ENCODE measurements at regions of chr19 and their contacts with region 1.

Region 1: DNA sequence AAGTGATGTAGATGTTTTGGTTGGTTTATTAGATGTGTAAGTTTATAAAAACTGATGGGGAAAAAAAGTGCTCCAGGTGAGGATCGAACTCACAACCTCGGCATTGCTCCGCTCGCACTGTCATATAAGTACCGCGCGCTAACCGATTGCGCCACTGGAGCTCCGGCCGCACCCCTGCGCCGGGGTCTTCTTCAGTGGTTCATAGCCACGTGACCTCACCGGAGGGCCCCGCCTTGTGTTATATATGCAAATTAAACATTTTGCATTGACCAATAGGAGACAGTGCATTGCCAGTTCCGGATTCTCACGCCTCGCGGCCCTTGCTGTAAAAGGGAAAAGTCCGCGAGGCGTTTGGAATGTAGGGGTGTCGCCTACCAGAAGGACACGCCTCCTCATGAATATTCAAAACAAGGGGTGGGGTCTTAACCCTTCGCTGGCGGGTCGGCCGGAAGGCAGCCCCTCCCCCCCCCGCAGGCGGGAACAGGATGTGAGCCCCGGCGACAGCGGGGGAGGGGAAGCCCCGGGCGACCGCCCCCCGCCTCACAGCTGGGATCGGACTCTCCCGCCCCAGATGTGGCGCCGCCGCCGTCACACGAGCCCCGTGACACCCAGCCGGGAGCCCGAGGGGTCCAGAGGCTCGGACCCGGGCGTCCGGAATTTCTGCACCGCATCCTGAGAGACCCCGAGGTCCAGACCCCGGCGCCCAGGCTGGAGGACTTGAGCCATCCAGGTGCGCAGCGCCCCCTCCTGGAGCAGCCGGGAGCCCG is at the start of gene PLEKHG2:
- DNase-seq: peak; percentile 98
- ATAC-seq: peak; percentile 73
- H3K4me3 Mint-ChIP-seq: peak within 1 kb of the TSS; percentile 73
- H3K27ac Mint-ChIP-seq: peak within 1 kb of the TSS; percentile 92
- H3K4me1 Mint-ChIP-seq: peaks cover 32% of the 10 kb centered on the region
- H3K27me3 Mint-ChIP-seq: no peaks in the 10 kb centered on the region
- total RNA-seq, gene PLEKHG2: 46.0 to 65.5 TPM

Region 2: DNA sequence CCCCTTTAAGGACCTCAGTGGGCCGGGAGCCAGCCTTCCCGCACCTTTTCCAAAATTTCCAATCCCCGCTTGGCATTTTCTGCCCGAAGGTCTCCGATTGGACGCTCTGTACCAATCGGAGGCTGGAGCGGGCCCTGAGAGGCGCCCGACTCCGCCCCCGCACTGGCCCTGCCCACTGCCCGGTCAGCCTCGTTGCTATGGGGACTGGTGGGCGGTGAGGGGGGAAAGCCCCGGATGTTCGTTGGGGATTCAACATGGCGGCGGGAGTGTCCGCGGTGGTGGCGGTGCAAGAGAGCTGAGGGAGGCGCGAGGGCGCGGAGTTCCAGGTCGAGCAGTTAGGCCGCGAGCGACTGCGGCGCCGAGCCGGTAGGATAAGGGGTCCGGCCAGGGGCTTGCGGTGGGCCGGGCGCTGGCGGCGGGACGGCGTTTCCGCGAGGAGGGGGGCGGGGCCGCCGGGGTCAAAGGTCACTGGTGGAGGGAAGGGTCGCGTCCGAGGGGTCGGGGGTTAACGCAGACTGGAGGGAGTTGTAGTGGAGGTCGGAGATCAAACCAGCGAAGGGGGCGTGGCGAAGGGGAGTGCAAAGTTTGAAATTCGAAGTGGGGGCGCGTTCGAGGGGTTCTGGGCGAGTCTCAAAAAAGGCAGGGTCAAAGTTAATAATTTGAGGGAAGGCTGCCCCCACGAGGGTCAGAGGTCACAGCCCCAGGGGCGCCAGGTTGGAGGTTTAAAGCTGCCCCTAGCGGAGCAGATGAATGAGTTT is 286.6 kb before region 1 on chr19 and contains the start of gene PAK4:
- CTCF ChIA-PET with region 1: no interaction called
- POLR2A ChIA-PET with region 1: no interaction called
- intact Hi-C with region 1: loop called in 1 of 2 experiments (anchors 1 kb)
- DNase-seq: peak; percentile 99
- ATAC-seq: peak; percentile 94
- H3K4me3 Mint-ChIP-seq: peak within 1 kb of the TSS; percentile 82
- H3K27ac Mint-ChIP-seq: peak within 1 kb of the TSS; percentile 90
- H3K4me1 Mint-ChIP-seq: peaks cover 25% of the 10 kb centered on the region
- H3K27me3 Mint-ChIP-seq: no peaks in the 10 kb centered on the region
- total RNA-seq, gene PAK4: 14.2 to 22.6 TPM

Region 3: DNA sequence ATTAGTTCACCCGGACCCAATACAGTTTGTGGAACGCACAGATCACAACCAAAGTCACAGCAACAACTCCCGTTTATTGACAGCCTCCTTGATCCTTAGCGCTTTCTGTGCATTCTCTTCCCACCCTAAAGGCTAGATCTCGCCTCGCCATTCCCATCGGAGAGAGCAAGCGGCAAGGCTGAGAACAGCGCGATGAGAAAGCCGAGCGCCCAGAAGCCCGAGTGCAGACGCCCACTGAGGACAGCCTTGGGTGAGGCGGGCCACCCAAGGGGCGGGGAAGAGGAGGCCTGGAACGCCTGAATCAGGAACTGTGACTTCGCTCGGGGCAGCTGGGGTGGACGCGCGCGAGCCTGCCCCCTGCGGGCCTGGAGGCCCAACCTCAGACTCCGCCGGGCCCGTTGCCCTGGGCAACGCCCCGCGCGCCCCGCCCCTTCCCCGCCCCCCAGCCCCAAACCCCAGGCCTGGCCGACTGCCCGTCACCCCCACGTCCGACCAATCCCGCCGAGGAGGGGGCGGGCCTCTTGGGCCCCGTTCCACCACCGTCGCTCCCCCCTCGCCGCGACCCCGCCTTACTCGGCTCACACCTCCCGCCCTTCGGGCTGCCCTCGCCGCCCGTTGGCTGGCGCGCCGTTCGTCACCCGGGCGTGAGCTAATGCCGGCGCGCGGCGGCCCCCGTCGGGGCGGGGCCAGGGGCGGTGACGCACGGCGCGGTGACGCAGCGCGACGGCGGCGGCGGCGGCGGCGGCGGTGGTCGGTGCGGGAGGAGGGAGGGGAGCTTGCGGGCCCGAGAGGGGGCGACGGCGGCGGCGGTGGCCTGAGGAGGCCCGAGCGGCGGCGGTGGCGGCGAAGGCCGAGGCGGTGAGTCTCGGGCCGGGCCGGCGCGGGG is 70.3 kb before region 1 on chr19 and contains the start of gene SAMD4B:
- CTCF ChIA-PET with region 1: interaction called, 4 read pairs
- POLR2A ChIA-PET with region 1: interaction called, 3 read pairs
- intact Hi-C with region 1: loop called (anchors 1 kb)
- DNase-seq: peak; percentile 100
- ATAC-seq: peak; percentile 90
- H3K4me3 Mint-ChIP-seq: peak within 1 kb of the TSS; percentile 83
- H3K27ac Mint-ChIP-seq: peak within 1 kb of the TSS; percentile 88
- H3K4me1 Mint-ChIP-seq: peaks cover 69% of the 10 kb centered on the region
- H3K27me3 Mint-ChIP-seq: no peaks in the 10 kb centered on the region
- total RNA-seq, gene SAMD4B: 45.2 to 46.9 TPM

Region 4: DNA sequence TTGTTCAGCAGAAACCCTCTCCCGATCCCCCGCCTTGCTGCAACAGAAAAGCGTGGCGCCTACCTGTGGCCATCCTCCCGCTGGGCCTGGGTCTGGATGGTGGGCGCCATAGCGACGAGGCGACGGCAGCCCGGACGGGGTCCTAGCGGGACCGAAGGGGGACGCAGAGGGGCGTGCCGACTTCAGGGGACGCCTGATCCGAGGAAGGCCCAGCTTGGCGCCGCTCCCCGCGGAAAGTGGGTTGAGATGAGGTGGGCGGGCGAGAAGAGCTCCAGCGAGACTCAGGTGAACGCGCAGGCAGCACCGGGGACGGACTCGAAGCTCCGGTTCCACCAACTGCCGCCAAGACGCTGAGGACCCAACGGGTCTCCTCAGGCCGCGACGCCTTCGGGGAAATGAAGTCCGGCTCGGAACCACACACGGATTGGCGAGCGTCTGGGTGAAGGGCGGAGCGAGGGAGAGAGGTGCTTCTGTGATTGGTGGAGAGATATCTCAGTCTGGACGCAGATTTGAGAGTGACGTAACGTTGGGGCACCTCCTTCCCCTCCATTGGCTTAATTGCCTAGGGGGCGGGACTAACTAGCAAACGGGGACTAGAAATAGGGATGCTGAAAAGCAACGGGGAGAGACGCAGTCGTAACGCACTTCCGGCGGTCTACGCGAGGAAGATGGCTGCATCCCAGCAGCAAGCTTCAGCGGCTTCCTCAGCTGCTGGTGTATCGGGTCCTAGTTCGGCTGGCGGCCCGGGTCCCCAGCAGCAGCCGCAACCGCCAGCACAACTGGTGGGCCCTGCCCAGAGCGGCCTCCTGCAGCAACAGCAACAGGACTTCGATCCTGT is 21.3 kb before region 1 on chr19 and contains the starts of genes MED29 and PAF1:
- CTCF ChIA-PET with region 1: interaction called, 79 read pairs
- POLR2A ChIA-PET with region 1: interaction called, 13 read pairs
- intact Hi-C with region 1: loop called (anchors 1 kb)
- DNase-seq: peak; percentile 98
- ATAC-seq: peak; percentile 97
- H3K4me3 Mint-ChIP-seq: peak within 1 kb of the TSS; percentile 99
- H3K27ac Mint-ChIP-seq: peak within 1 kb of the TSS; percentile 98
- H3K4me1 Mint-ChIP-seq: peaks cover 28% of the 10 kb centered on the region
- H3K27me3 Mint-ChIP-seq: no peaks in the 10 kb centered on the region
- total RNA-seq, gene MED29: 24.0 to 34.6 TPM
- total RNA-seq, gene PAF1: 40.4 to 54.2 TPM

Region 5: GRCh38 chr19:39435499-39436349 is 23.4 kb after region 1 on chr19 and contains the start of gene RPS16:
- CTCF ChIA-PET with region 1: interaction called, 10 read pairs
- POLR2A ChIA-PET with region 1: interaction called, 11 read pairs
- intact Hi-C with region 1: loop called (anchors 1 kb)
- DNase-seq: peak; percentile 100
- ATAC-seq: peak; percentile 84
- H3K4me3 Mint-ChIP-seq: peak within 1 kb of the TSS; percentile 99
- H3K27ac Mint-ChIP-seq: peak within 1 kb of the TSS; percentile 100
- H3K4me1 Mint-ChIP-seq: peaks cover 45% of the 10 kb centered on the region
- H3K27me3 Mint-ChIP-seq: no peaks in the 10 kb centered on the region
- total RNA-seq, gene RPS16: 3,146 to 3,331 TPM

Region 6: DNA sequence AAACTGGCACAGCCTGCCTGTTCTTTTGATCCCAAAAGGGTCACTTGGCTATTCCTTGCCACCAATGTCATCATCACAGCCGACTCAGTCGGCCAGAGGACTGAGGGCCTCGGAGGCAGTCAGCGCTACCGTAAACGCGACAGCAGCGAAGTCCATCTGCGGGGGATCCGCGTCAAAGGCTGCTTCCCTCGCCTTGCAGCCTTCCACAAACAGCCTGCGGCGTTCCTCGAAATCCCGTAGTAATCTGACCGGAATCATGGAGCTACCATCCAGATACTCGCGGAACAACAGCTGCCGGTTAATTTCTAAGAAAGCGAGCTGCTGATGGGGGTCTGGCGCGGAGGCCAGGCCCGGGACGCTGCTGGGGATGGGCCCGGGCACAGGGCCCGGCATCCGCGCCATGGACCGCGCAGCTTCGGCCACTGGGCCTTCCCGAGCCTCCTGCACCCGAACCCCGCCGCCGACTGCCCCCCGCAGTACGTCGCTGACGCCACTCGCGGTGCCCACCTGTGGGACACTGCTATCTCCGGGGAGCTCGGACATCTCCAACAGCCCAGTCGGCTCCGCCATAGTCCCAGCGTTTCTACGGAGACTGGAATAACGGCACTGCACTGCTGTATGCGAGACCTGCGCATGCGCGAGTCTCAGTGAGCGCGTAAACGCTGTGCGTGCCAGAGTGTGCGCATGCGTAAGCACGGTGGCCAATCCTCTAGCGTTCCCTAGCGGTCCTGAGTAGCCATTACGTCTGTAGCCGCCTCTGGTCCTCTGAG is 120.1 kb after region 1 on chr19 and contains the start of gene EID2B:
- CTCF ChIA-PET with region 1: interaction called, 3 read pairs
- POLR2A ChIA-PET with region 1: no interaction called
- intact Hi-C with region 1: loop called in 1 of 2 experiments (anchors 1 kb)
- DNase-seq: peak; percentile 97
- ATAC-seq: peak; percentile 97
- H3K4me3 Mint-ChIP-seq: peak within 1 kb of the TSS; percentile 93
- H3K27ac Mint-ChIP-seq: peak within 1 kb of the TSS; percentile 86
- H3K4me1 Mint-ChIP-seq: peaks cover 26% of the 10 kb centered on the region
- H3K27me3 Mint-ChIP-seq: no peaks in the 10 kb centered on the region
- total RNA-seq, gene EID2B: 1.4 to 3.5 TPM

Measured in activated CD4-positive, alpha-beta T cell treated with anti-CD3 and anti-CD28 coated beads for 36 hours (primary cell).